Activated B cell treated with CpG ODN at 0.5 μM for 24 hours (primary cell): ENCODE measurements at regions of chrX and their contacts with region 1.

Region 1: GRCh38 chrX:7083468-7084396 is 63.8 kb upstream of the STS start:
- DNase-seq: peak; percentile 21
- ATAC-seq: peak; percentile 85
- H3K4me3 Mint-ChIP-seq: peak overlapping the region; percentile 65
- H3K27ac Mint-ChIP-seq: peak overlapping the region; percentile 84
- H3K4me1 Mint-ChIP-seq: peaks cover 74% of the 10 kb centered on the region
- H3K27me3 Mint-ChIP-seq: no peaks in the 10 kb centered on the region
- CTCF ChIP-seq: no peak

Region 2: GRCh38 chrX:6225911-6226595 is 857.7 kb before region 1 on chrX:
- CTCF ChIA-PET with region 1: no interaction called
- POLR2A ChIA-PET with region 1: no interaction called
- intact Hi-C with region 1: loop called (anchors 10 kb)
- DNase-seq: no peak
- ATAC-seq: no peak
- H3K4me3 Mint-ChIP-seq: peak overlapping the region; percentile 48
- H3K27ac Mint-ChIP-seq: no peak overlapping the region
- H3K4me1 Mint-ChIP-seq: peaks cover 7% of the 10 kb centered on the region
- H3K27me3 Mint-ChIP-seq: peaks cover 17% of the 10 kb centered on the region
- CTCF ChIP-seq: no peak

Region 3: DNA sequence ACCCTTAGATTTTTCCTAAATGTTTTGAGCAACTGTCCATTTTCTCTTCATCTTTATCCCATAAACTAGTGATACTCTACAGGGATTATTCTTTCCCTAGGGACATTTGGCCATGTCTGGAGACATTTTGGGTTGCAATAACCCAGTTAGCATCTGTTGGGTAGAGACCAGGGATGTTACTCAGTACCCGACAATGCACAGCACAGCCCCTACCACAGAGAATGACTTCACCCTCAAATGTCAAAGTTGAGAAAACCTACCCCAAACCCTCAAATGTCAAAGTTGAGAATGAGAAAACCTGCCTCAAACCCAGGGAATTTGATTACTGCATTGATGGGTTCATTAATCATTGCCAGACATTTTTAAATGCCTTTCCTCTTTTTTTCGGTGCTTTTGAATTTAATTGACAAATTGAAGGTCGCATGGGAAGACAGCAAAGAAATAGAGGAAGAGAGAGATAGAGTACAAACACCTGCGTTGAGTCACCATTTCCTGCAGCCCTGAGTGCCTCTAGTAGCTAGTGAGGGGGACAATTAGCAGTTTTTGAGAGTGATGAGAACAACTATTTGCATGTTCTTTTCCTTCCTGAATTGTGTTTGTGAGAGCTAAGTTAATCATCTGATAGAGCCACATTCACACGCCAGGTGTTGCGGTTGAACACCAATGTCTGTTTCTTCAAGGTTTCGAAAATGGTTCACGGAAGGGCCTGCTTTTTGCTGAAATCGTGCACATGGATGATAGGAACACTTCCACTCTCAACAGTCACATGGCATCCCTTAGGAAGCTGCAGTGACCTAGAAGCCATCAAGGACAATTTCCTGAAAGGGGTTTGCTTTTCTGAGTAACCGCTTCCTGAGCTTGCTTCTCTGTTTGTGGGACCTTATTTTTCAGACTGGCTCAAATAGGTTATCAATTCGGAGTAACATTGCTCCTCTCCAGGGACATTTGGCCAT is 344.9 kb before region 1 on chrX:
- CTCF ChIA-PET with region 1: no interaction called
- POLR2A ChIA-PET with region 1: interaction called, 5 read pairs
- intact Hi-C with region 1: loop called (anchors 5 kb)
- DNase-seq: peak; percentile 14
- ATAC-seq: peak; percentile 87
- H3K4me3 Mint-ChIP-seq: peak overlapping the region; percentile 15
- H3K27ac Mint-ChIP-seq: peak overlapping the region; percentile 74
- H3K4me1 Mint-ChIP-seq: peaks cover 26% of the 10 kb centered on the region
- H3K27me3 Mint-ChIP-seq: no peaks in the 10 kb centered on the region
- CTCF ChIP-seq: no peak

Region 4: GRCh38 chrX:7059214-7059838 is 24.4 kb before region 1 on chrX:
- CTCF ChIA-PET with region 1: no interaction called
- POLR2A ChIA-PET with region 1: interaction called, 9 read pairs
- intact Hi-C with region 1: loop called (anchors 1 kb)
- DNase-seq: no peak
- ATAC-seq: peak; percentile 79
- H3K4me3 Mint-ChIP-seq: peak overlapping the region; percentile 33
- H3K27ac Mint-ChIP-seq: peak overlapping the region; percentile 70
- H3K4me1 Mint-ChIP-seq: peaks cover 63% of the 10 kb centered on the region
- H3K27me3 Mint-ChIP-seq: no peaks in the 10 kb centered on the region
- CTCF ChIP-seq: no peak

Region 5: DNA sequence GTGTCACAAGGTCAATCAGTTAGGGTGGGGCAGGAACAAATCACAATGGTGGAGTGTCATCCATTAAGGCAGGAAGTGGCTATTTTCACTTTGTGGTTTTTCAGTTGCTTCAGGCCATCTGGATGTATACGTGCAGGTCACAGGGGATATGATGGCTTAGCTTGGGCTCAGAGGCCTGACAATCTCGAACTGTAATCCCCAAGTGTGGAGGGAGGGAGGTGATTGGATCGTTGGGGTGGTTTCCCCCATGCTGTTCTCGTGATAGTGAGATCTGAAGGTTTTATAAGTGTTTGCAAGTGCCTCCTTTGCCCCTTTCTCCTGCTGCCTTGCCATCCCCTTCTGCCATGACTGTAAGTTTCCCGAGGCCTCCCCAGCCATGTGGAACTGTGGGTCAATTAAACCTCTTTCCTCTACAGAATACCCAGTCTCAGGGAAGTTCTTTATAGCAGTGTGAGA is 27.1 kb after region 1 on chrX:
- CTCF ChIA-PET with region 1: no interaction called
- POLR2A ChIA-PET with region 1: interaction called, 7 read pairs
- intact Hi-C with region 1: loop called (anchors 1 kb)
- DNase-seq: no peak
- ATAC-seq: peak; percentile 78
- H3K4me3 Mint-ChIP-seq: peak overlapping the region; percentile 74
- H3K27ac Mint-ChIP-seq: peak overlapping the region; percentile 93
- H3K4me1 Mint-ChIP-seq: peaks cover 44% of the 10 kb centered on the region
- H3K27me3 Mint-ChIP-seq: no peaks in the 10 kb centered on the region
- CTCF ChIP-seq: no peak

Region 6: GRCh38 chrX:7147978-7148824 is 64.5 kb after region 1 on chrX and contains the start of gene PUDP:
- CTCF ChIA-PET with region 1: no interaction called
- POLR2A ChIA-PET with region 1: interaction called, 3 read pairs
- intact Hi-C with region 1: loop called (anchors 1 kb)
- DNase-seq: peak; percentile 80
- ATAC-seq: peak; percentile 85
- H3K4me3 Mint-ChIP-seq: peak within 1 kb of the TSS; percentile 89
- H3K27ac Mint-ChIP-seq: peak within 1 kb of the TSS; percentile 88
- H3K4me1 Mint-ChIP-seq: peaks cover 9% of the 10 kb centered on the region
- H3K27me3 Mint-ChIP-seq: no peaks in the 10 kb centered on the region
- CTCF ChIP-seq: no peak
- total RNA-seq, gene PUDP: 14.0 and 15.0 TPM in 2 replicates

Region 7: DNA sequence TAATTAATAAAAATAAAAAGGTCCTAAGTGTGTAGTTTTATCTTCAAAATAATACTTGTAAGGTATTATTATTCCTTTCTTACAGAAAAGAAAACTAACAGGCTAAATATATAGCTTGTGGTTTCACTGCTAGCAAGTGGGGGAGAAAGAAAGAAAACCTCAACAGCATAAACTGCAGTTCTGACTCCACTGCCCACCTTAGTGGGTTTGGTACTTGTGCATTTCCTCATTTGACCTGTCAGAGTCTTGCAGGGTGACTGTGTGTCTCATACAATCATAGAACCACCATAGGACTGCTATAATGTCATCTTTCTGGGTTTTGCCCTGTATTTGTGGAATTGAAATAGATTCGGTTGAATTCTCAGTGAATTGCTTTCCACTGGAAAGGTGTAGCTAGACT is 158.9 kb after region 1 on chrX:
- CTCF ChIA-PET with region 1: no interaction called
- POLR2A ChIA-PET with region 1: no interaction called
- intact Hi-C with region 1: no loop called
- DNase-seq: no peak
- ATAC-seq: no peak
- H3K4me3 Mint-ChIP-seq: no peak overlapping the region
- H3K27ac Mint-ChIP-seq: no peak overlapping the region
- H3K4me1 Mint-ChIP-seq: peaks cover 8% of the 10 kb centered on the region
- H3K27me3 Mint-ChIP-seq: no peaks in the 10 kb centered on the region
- CTCF ChIP-seq: no peak

Region 8: DNA sequence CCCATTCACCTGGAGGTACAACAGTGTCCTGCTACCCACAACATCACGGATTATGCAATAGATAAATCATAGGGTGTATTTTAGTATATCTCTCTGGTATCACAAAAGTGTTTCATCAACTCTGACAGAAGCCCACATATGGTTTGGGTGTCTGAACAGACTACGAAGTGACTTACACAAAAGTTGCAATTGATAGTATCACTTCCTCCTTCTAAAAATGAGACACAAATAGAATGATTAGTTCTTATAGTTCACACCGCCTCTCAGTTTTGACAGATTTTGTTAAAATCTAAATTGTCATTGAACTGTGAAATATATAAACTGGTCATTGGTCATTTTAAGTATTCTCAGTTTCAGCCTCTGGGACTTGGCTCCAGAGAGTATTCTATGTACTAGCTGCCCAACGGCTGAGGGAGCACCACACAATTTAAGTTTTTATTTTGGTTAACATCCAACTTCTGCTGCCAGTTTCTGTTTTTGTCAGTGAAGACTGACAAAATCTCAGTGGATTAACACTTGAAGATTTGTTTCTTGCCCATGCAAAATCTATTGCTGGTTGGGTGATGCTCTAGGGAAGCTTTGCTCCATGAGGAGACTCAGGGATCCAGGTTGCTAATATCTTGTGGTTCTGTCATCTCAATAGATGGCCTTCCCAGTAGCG is 178.1 kb after region 1 on chrX:
- CTCF ChIA-PET with region 1: no interaction called
- POLR2A ChIA-PET with region 1: no interaction called
- intact Hi-C with region 1: loop called (anchors 1 kb)
- DNase-seq: no peak
- ATAC-seq: peak; percentile 62
- H3K4me3 Mint-ChIP-seq: peak overlapping the region; percentile 64
- H3K27ac Mint-ChIP-seq: peak overlapping the region; percentile 89
- H3K4me1 Mint-ChIP-seq: peaks cover 39% of the 10 kb centered on the region
- H3K27me3 Mint-ChIP-seq: no peaks in the 10 kb centered on the region
- CTCF ChIP-seq: no peak